IMR-90 (cell line): ENCODE measurements at regions of chr6 and their contacts with region 1.

Region 1: GRCh38 chr6:3697609-3698008 is 53.9 kb downstream of the PXDC1 start:
- DNase-seq: peak; percentile 92
- ATAC-seq: peak; percentile 95
- H3K4me3 ChIP-seq: no peak overlapping the region
- H3K27ac ChIP-seq: no peak overlapping the region
- H3K4me1 ChIP-seq: peaks cover 10% of the 10 kb centered on the region
- H3K27me3 ChIP-seq: peaks cover 6% of the 10 kb centered on the region
- CTCF ChIP-seq: no peak
- POLR2A ChIP-seq: no peak
- RAD21 ChIP-seq: no peak

Region 2: DNA sequence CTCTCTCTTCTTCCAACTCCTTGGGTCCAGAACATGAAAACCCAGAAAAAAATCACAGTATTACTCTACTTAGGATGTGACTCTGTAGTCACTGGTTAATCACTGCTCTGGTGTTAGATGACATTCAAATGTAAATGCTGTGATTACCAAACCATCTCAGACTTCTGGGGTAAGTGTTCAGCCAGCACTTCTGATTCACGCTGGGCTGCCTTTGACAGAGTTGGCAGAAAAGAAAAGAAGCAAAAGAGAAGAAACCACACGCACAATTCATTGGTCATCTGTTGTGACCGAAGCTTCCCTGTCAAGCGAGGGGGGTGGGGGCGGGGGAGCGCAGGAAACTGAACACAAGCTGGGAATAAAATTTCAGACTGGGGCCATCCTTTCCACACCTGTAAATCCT is 356.1 kb before region 1 on chr6:
- CTCF ChIA-PET with region 1: no interaction called
- POLR2A ChIA-PET with region 1: no interaction called
- dilution Hi-C with region 1: no loop called
- in situ Hi-C with region 1: no loop called
- intact Hi-C with region 1: loop called (anchors 1 kb)
- DNase-seq: peak; percentile 83
- ATAC-seq: peak; percentile 73
- H3K4me3 ChIP-seq: no peak overlapping the region
- H3K27ac ChIP-seq: no peak overlapping the region
- H3K4me1 ChIP-seq: peaks cover 10% of the 10 kb centered on the region
- H3K27me3 ChIP-seq: peaks cover 14% of the 10 kb centered on the region
- CTCF ChIP-seq: no peak
- POLR2A ChIP-seq: no peak
- RAD21 ChIP-seq: no peak

Region 3: GRCh38 chr6:3427687-3428085 is 269.9 kb before region 1 on chr6:
- CTCF ChIA-PET with region 1: no interaction called
- POLR2A ChIA-PET with region 1: no interaction called
- dilution Hi-C with region 1: no loop called
- in situ Hi-C with region 1: no loop called
- intact Hi-C with region 1: no loop called
- DNase-seq: no peak
- ATAC-seq: no peak
- H3K4me3 ChIP-seq: no peak overlapping the region
- H3K27ac ChIP-seq: no peak overlapping the region
- H3K4me1 ChIP-seq: no peaks in the 10 kb centered on the region
- H3K27me3 ChIP-seq: peaks cover 46% of the 10 kb centered on the region
- CTCF ChIP-seq: no peak
- POLR2A ChIP-seq: no peak
- RAD21 ChIP-seq: no peak

Region 4: GRCh38 chr6:3534599-3534998 is 163.0 kb before region 1 on chr6:
- CTCF ChIA-PET with region 1: no interaction called
- POLR2A ChIA-PET with region 1: no interaction called
- dilution Hi-C with region 1: no loop called
- in situ Hi-C with region 1: no loop called
- intact Hi-C with region 1: no loop called
- DNase-seq: peak; percentile 79
- ATAC-seq: 0 out of 2 replicates have a peak, but pooled peaks have one; percentile 21
- H3K4me3 ChIP-seq: no peak overlapping the region
- H3K27ac ChIP-seq: no peak overlapping the region
- H3K4me1 ChIP-seq: no peaks in the 10 kb centered on the region
- H3K27me3 ChIP-seq: peaks cover 52% of the 10 kb centered on the region
- CTCF ChIP-seq: no peak
- POLR2A ChIP-seq: no peak
- RAD21 ChIP-seq: no peak

Region 5: DNA sequence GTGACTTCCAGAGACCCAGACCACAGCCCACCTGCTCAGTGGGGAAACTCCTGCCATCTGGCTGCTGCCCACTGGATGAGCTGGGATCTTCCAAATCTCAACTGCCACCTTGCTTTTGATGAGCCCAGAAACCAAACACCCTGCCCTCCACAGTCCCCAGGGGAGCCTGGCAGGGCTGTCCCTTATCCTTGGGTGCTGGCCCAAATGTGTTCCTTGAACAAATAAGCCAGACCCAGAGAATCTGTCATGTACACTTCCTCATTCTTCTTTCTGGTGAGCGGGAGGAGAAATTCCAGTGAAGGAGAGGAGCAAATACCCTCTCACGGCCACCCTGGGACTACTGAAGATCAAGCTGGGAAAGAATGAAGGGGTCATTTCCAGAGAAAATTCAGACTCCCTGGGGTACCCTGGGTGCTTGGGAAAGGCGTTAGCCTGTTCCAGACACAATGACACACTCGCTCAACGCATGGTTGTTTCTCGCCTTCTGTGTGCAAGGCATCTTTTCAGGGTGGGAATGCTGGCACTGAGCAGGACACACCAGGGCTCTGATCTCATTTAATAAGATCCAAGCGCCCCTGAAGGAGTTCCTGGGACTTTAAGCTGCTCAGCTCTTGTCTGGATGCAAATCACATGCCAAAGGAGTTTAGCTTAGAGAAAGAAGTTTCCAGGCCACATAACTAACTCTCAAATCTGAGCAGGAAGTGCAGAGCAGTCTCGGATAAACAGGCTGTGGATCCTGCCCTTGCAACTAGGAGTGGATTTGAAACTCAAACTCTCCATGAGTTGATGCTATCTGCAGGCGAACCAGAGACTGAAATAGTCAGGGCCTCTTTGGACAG is 15.4 kb after region 1 on chr6:
- CTCF ChIA-PET with region 1: no interaction called
- POLR2A ChIA-PET with region 1: no interaction called
- dilution Hi-C with region 1: no loop called
- in situ Hi-C with region 1: no loop called
- intact Hi-C with region 1: no loop called
- DNase-seq: no peak
- ATAC-seq: peak; percentile 46; the same call in 1 of the 2 replicates
- H3K4me3 ChIP-seq: no peak overlapping the region
- H3K27ac ChIP-seq: no peak overlapping the region
- H3K4me1 ChIP-seq: no peaks in the 10 kb centered on the region; the same call in 1 of the 2 replicates
- H3K27me3 ChIP-seq: no peaks in the 10 kb centered on the region
- CTCF ChIP-seq: no peak
- POLR2A ChIP-seq: no peak
- RAD21 ChIP-seq: no peak